ENCODE measurements at regions of chr1 and their contacts with region 1.

Region 1: GRCh38 chr1:171226747-171227370 is 21.4 kb upstream of the FMO1 start:
- DNase-seq: peak; percentile 85
- H3K4me3 Mint-ChIP-seq: no peak overlapping the region
- H3K27ac Mint-ChIP-seq: no peak overlapping the region
- H3K4me1 Mint-ChIP-seq: peaks cover 21% of the 10 kb centered on the region
- H3K27me3 Mint-ChIP-seq: no peaks in the 10 kb centered on the region
- CTCF ChIP-seq: peak; percentile 96

Region 2: DNA sequence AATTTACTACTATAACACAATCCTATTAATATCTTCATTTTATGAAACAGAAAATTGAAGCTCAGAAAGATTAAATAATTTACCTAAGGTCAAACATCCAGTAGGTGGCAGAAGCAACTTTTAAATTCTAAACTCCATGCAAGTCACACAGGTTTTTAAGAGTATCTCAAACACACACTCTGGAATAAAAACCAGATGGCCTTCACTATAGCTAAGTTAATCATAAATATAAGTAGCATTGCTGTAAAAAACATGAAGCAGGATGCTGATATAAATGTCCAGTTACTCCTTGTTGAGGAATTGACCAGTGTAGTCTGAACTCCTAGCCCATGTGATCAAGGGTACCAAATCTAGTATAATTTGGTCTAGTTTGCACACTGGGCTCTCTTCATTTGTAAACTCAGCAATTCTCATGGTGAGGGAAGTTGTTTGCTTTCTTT is 145.5 kb before region 1 on chr1:
- CTCF ChIA-PET with region 1: interaction called, 146 read pairs
- POLR2A ChIA-PET with region 1: interaction called, 3 read pairs
- intact Hi-C with region 1: loop called (anchors 1 kb)
- DNase-seq: peak; percentile 52
- H3K4me3 Mint-ChIP-seq: no peak overlapping the region
- H3K27ac Mint-ChIP-seq: no peak overlapping the region
- H3K4me1 Mint-ChIP-seq: no peaks in the 10 kb centered on the region
- H3K27me3 Mint-ChIP-seq: no peaks in the 10 kb centered on the region
- CTCF ChIP-seq: peak; percentile 34

Region 3: DNA sequence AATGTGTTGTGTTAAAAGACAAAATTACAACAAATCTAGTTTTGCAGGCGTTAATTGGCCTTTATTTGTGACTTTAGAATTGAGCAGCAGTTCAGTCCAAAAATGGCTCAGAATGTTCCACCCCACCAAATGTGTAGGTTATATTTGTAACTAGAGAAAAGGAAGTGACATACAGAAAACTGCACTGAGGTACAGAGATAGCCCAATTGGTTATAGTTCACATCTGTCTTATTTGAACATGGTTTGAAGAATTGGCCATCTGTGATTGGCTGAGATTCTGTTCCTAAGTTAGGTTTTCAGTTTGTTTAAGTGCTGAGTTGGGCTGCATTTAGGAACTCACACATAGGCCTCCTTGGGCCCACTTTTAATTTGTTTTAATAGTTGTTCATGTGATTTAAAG is 53.8 kb before region 1 on chr1:
- CTCF ChIA-PET with region 1: interaction called, 23 read pairs
- POLR2A ChIA-PET with region 1: no interaction called
- intact Hi-C with region 1: no loop called
- DNase-seq: no peak
- H3K4me3 Mint-ChIP-seq: no peak overlapping the region
- H3K27ac Mint-ChIP-seq: no peak overlapping the region
- H3K4me1 Mint-ChIP-seq: no peaks in the 10 kb centered on the region
- H3K27me3 Mint-ChIP-seq: no peaks in the 10 kb centered on the region
- CTCF ChIP-seq: no peak

Region 4: DNA sequence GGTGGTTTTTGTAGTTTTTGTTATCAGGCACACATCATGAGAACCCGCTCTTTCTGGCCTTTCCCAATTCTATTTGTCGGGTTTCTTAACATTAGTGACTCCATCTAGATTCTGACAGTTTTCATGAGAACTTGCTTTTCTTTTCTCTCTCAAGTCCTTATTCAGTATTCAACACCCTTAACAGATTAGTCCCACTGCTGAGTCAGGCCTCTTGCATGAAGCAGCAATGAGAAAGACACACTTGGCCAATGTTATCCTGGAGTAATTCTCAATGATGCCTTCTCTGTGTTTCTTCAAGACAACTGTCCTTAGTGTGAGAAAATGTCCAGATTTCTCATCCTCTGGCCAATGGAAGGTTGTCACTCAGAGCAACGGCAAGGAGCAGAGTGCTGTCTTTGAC is 30.5 kb before region 1 on chr1:
- CTCF ChIA-PET with region 1: interaction called, 31 read pairs
- POLR2A ChIA-PET with region 1: interaction called, 3 read pairs
- intact Hi-C with region 1: no loop called
- DNase-seq: no peak
- H3K4me3 Mint-ChIP-seq: no peak overlapping the region
- H3K27ac Mint-ChIP-seq: no peak overlapping the region
- H3K4me1 Mint-ChIP-seq: no peaks in the 10 kb centered on the region
- H3K27me3 Mint-ChIP-seq: no peaks in the 10 kb centered on the region
- CTCF ChIP-seq: no peak

Region 5: GRCh38 chr1:171245458-171246064 is 18.7 kb after region 1 on chr1:
- CTCF ChIA-PET with region 1: interaction called, 181 read pairs
- POLR2A ChIA-PET with region 1: interaction called, 5 read pairs
- intact Hi-C with region 1: no loop called
- DNase-seq: peak; percentile 77
- H3K4me3 Mint-ChIP-seq: no peak overlapping the region
- H3K27ac Mint-ChIP-seq: no peak overlapping the region
- H3K4me1 Mint-ChIP-seq: no peaks in the 10 kb centered on the region
- H3K27me3 Mint-ChIP-seq: peaks cover 15% of the 10 kb centered on the region
- CTCF ChIP-seq: peak; percentile 78

Region 6: DNA sequence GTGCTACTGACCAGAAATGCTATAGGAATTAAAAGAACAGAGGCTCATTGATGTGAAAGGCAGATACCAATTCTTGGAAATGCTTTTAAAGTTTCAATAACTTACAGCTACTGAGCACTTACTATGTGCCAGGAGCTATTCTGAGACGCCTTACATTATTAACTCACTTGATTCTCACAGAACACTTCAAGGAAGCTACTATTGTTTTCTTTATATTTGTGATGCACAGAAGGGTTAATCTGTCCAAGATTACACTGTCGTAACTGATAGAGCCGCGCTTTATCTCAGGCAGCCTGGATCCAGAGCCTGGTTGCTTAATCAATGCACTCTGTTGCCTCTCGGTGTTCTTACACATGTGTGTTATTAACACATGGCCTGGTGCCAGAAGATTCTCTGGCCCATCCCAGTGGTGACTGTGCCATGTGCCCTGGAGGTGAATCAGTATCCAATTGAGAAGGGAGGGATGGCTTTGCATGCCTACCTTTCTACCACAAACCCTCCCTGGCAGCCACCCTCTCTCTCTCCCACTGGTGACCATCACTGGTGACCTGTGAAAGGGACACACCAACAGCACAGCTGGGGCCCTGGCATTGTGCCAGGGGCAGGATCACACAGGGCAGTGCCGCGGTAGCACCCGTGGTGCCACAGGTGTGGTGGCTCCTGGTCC is 30.2 kb after region 1 on chr1:
- CTCF ChIA-PET with region 1: interaction called, 15 read pairs
- POLR2A ChIA-PET with region 1: interaction called, 4 read pairs
- intact Hi-C with region 1: no loop called
- DNase-seq: peak; percentile 98
- H3K4me3 Mint-ChIP-seq: no peak overlapping the region
- H3K27ac Mint-ChIP-seq: no peak overlapping the region
- H3K4me1 Mint-ChIP-seq: peaks cover 24% of the 10 kb centered on the region
- H3K27me3 Mint-ChIP-seq: no peaks in the 10 kb centered on the region
- CTCF ChIP-seq: no peak

Region 7: GRCh38 chr1:172172352-172172831 is 945.5 kb after region 1 on chr1:
- CTCF ChIA-PET with region 1: no interaction called
- POLR2A ChIA-PET with region 1: no interaction called
- intact Hi-C with region 1: no loop called
- DNase-seq: no peak
- H3K4me3 Mint-ChIP-seq: no peak overlapping the region
- H3K27ac Mint-ChIP-seq: no peak overlapping the region
- H3K4me1 Mint-ChIP-seq: no peaks in the 10 kb centered on the region
- H3K27me3 Mint-ChIP-seq: no peaks in the 10 kb centered on the region
- CTCF ChIP-seq: no peak